B cell (primary cell): ENCODE measurements at regions of chr10 and their contacts with region 1.

Region 1: DNA sequence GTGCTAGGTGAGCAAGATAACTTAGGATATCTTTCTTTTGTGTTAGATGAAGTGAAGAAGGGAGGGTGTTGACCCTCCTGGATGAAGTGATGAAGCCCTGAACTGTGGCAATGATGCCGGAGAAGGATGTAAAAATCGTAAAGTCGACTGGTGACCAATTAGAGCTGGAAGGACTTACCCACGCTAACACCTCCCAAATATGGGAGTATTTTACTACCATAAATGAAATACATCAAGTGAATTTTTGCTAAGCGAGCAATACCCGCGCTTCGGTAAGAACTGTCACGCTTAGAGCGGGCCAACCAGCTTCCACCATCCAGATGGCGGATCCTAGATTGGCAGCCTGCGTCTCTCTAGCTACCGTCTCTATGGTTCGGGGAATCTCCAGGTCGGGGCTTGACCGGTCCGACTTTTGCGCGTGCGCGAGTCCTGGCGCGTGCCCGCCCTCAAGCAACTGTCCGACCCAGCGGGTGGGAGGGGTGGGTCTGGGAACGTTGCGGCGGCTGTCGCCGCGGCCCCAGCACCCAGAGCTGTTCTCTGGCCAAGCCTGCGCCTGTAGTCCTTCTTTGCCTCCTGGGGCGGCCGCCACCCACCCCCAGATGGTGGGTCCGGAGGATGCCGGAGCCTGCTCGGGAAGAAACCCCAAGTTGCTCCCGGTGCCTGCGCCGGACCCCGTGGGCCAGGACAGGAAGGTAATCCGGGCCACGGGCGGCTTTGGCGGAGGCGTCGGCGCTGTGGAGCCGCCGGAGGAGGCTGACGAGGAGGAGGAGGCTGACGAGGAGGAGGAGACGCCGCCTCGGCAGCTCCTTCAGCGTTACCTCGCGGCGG is at the start of gene TBC1D12:
- DNase-seq: peak; percentile 76
- ATAC-seq: peak; percentile 35
- H3K4me3 ChIP-seq: peak within 1 kb of the TSS; percentile 7 to 92 (median 79)
- H3K4me3 Mint-ChIP-seq: peak within 1 kb of the TSS; percentile 94
- H3K27ac ChIP-seq: peak within 1 kb of the TSS; percentile 76 to 86
- H3K27ac Mint-ChIP-seq: peak within 1 kb of the TSS; percentile 96
- H3K4me1 ChIP-seq: peaks cover 13 to 15% of the 10 kb centered on the region in 2 donors
- H3K4me1 Mint-ChIP-seq: peaks cover 15% of the 10 kb centered on the region
- H3K27me3 ChIP-seq: peaks cover 0 to 8% (median 0%) of the 10 kb centered on the region in 4 experiments
- H3K27me3 Mint-ChIP-seq: peaks cover 23% of the 10 kb centered on the region
- CTCF ChIP-seq: no peak
- total RNA-seq, gene TBC1D12: 9.3 and 9.6 TPM in 2 replicates

Region 2: GRCh38 chr10:94344522-94345122 is 57.6 kb before region 1 on chr10:
- CTCF ChIA-PET with region 1: interaction called, 3 read pairs
- POLR2A ChIA-PET with region 1: interaction called, 3 read pairs
- intact Hi-C with region 1: loop called (anchors 10 kb)
- DNase-seq: peak; percentile 70
- ATAC-seq: peak; percentile 85
- H3K4me3 ChIP-seq: peak overlapping the region in 4 of 5 experiments; percentile 20 to 52 (median 36)
- H3K4me3 Mint-ChIP-seq: peak overlapping the region; percentile 89
- H3K27ac ChIP-seq: peak overlapping the region; percentile 70 to 82
- H3K27ac Mint-ChIP-seq: peak overlapping the region; percentile 93
- H3K4me1 ChIP-seq: peaks cover 17 to 25% of the 10 kb centered on the region in 2 donors
- H3K4me1 Mint-ChIP-seq: peaks cover 26% of the 10 kb centered on the region
- H3K27me3 ChIP-seq: no peaks in the 10 kb centered on the region
- H3K27me3 Mint-ChIP-seq: no peaks in the 10 kb centered on the region
- CTCF ChIP-seq: no peak

Region 3: DNA sequence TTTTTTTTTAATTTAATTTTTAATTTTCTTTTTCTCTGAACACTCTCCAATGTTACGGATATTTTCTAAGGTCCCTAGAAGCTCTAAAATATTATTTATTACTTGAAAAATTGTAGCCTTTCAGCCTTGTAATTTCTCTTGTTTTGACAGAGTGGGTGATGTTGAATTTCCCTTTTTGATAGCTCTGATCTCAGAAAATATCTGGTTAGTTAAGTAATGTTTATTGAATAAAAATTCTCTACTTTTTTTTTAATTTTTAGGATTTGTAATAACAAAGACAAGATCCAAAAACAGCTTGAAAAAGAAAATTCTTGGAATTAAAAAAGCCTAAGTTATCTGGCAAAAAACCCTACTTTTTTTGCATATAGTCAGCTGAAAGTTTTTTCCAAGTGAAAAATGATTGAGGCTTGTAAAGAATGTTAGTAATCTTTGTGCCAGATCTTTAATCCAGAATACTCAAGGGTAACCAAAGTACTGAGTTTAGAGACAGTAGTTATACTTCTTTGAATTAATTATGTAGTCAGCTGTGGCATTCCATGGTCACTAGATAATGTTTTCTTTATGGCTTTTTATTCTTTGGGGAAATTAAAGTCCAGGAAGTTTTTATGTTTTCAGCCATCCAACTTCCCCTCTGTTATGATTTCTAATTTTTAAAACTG is 26.9 kb after region 1 on chr10:
- CTCF ChIA-PET with region 1: no interaction called
- POLR2A ChIA-PET with region 1: no interaction called
- intact Hi-C with region 1: no loop called
- DNase-seq: no peak
- ATAC-seq: no peak
- H3K4me3 ChIP-seq: no peak overlapping the region
- H3K4me3 Mint-ChIP-seq: no peak overlapping the region
- H3K27ac ChIP-seq: no peak overlapping the region
- H3K27ac Mint-ChIP-seq: no peak overlapping the region
- H3K4me1 ChIP-seq: peaks cover 0 to 3% of the 10 kb centered on the region in 2 donors
- H3K4me1 Mint-ChIP-seq: peaks cover 9% of the 10 kb centered on the region
- H3K27me3 ChIP-seq: no peaks in the 10 kb centered on the region
- H3K27me3 Mint-ChIP-seq: no peaks in the 10 kb centered on the region
- CTCF ChIP-seq: no peak

Region 4: GRCh38 chr10:94545391-94546048 is 143.3 kb after region 1 on chr10 and contains the start of gene HELLS:
- CTCF ChIA-PET with region 1: no interaction called
- POLR2A ChIA-PET with region 1: no interaction called
- intact Hi-C with region 1: loop called (anchors 2 kb)
- DNase-seq: peak; percentile 84
- ATAC-seq: peak; percentile 79
- H3K4me3 ChIP-seq: peak within 1 kb of the TSS; percentile 57 to 99 (median 95)
- H3K4me3 Mint-ChIP-seq: peak within 1 kb of the TSS; percentile 94
- H3K27ac ChIP-seq: peak within 1 kb of the TSS; percentile 50 to 71
- H3K27ac Mint-ChIP-seq: peak within 1 kb of the TSS; percentile 86
- H3K4me1 ChIP-seq: peaks cover 14 to 18% of the 10 kb centered on the region in 2 donors
- H3K4me1 Mint-ChIP-seq: peaks cover 22% of the 10 kb centered on the region
- H3K27me3 ChIP-seq: no peaks in the 10 kb centered on the region
- H3K27me3 Mint-ChIP-seq: no peaks in the 10 kb centered on the region
- CTCF ChIP-seq: no peak
- total RNA-seq, gene HELLS: 26.0 and 27.4 TPM in 2 replicates